Right lobe of liver (tissue), 6 donors: ENCODE measurements at regions of chr1 and their contacts with region 1.

Region 1: DNA sequence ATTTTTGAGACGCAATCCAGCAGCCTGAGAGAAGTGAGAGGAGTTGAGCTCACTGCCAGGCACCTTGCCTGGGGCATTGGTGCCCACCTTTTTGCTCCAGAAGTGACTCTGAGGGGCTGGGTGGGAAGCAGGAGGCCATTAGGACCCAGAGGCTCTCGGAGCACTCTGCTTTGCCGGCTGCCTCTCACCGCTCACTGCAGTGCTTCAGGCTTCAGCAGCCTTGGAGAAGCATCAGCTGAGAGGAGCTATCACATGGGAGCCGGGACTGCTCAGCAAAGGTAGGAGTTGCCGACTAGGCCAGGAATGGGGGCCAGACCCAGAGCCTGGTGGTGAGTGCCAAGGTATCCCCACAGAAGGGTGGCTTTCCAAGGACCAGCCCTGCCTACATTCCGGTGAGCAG is at the start of gene GPR61:
- DNase-seq: no peak
- ATAC-seq: no peak
- H3K4me3 ChIP-seq: no peak within 1 kb of the TSS
- H3K27ac ChIP-seq: no peak within 1 kb of the TSS
- H3K4me1 ChIP-seq: peaks cover 0 to 7% (median 0%) of the 10 kb centered on the region in 4 donors
- H3K27me3 ChIP-seq: no peaks in the 10 kb centered on the region
- CTCF ChIP-seq: no peak
- POLR2A ChIP-seq: no peak
- total RNA-seq, gene GPR61: not detected

Region 2: DNA sequence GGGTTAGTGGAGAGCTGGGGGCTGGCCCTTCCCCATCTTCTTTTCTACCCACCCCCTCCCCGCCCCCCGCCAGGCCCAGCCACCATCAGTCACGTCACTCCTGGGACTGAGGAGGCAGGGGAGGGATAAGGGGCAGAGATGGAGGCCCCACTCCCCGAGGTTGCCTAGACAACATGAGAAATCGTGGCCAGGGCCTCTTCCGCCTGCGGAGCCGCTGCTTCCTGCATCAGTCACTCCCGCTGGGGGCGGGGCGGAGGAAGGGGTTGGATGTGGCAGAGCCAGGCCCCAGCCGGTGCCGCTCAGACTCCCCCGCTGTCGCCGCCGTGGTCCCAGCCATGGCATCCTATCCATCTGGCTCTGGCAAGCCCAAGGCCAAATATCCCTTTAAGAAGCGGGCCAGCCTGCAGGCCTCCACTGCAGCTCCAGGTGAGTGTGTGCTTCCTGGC is 81.2 kb after region 1 on chr1:
- intact Hi-C with region 1: loop called (anchors 5 to 10 kb)
- DNase-seq: peak; percentile 94 to 97 (median 95)
- ATAC-seq: peak; percentile 69 to 77 (median 74)
- H3K4me3 ChIP-seq: peak overlapping the region; percentile 64 to 94 (median 68)
- H3K27ac ChIP-seq: peak overlapping the region; percentile 69 to 76 (median 76)
- H3K4me1 ChIP-seq: peaks cover 0 to 43% (median 13%) of the 10 kb centered on the region in 4 donors
- H3K27me3 ChIP-seq: no peaks in the 10 kb centered on the region
- CTCF ChIP-seq: no peak
- POLR2A ChIP-seq: no peak

Region 3: GRCh38 chr1:109892561-109893368 is 353.1 kb after region 1 on chr1:
- intact Hi-C with region 1: no loop called
- DNase-seq: no peak
- ATAC-seq: peak in 3 of 4 donors; percentile 19 to 51 (median 21)
- H3K4me3 ChIP-seq: no peak overlapping the region
- H3K27ac ChIP-seq: no peak overlapping the region
- H3K4me1 ChIP-seq: no peaks in the 10 kb centered on the region
- H3K27me3 ChIP-seq: no peaks in the 10 kb centered on the region
- CTCF ChIP-seq: no peak
- POLR2A ChIP-seq: no peak